ENCODE measurements at regions of chr21 and their contacts with region 1.

Region 1: GRCh38 chr21:42593007-42593806 is 60.2 kb upstream of the PDE9A start:
- DNase-seq: peak; percentile 90
- H3K4me3 Mint-ChIP-seq: no peak overlapping the region
- H3K27ac Mint-ChIP-seq: no peak overlapping the region
- H3K4me1 Mint-ChIP-seq: peaks cover 15% of the 10 kb centered on the region
- H3K27me3 Mint-ChIP-seq: peaks cover 2% of the 10 kb centered on the region

Region 2: GRCh38 chr21:42513985-42514882 is 79.0 kb before region 1 on chr21:
- intact Hi-C with region 1: loop called (anchors 10 kb)
- DNase-seq: peak; percentile 90
- H3K4me3 Mint-ChIP-seq: peak overlapping the region; percentile 78
- H3K27ac Mint-ChIP-seq: peak overlapping the region; percentile 10
- H3K4me1 Mint-ChIP-seq: peaks cover 20% of the 10 kb centered on the region
- H3K27me3 Mint-ChIP-seq: peaks cover 14% of the 10 kb centered on the region

Region 3: GRCh38 chr21:42818328-42818749 is 225.1 kb after region 1 on chr21:
- intact Hi-C with region 1: loop called (anchors 2 kb)
- DNase-seq: peak; percentile 85
- H3K4me3 Mint-ChIP-seq: no peak overlapping the region
- H3K27ac Mint-ChIP-seq: no peak overlapping the region
- H3K4me1 Mint-ChIP-seq: no peaks in the 10 kb centered on the region
- H3K27me3 Mint-ChIP-seq: peaks cover 5% of the 10 kb centered on the region

Region 4: DNA sequence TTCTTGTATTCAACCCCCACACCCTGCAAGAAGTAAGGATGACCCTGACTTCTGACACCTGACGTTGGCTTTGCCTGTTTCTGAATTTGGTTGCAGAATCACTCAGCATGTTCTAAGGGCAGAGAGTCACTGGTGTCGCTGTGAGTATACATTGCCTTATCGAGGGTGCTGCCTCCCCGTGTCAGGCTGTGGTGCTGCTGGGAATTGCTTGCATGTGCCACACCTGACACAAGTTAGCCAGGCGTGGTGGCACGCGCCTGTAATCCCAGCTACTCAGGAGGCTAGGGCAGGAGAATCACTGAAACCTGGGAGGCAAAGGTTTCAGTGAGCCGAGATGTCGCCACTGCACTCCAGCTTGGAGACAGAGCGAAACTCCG is 240.2 kb after region 1 on chr21:
- intact Hi-C with region 1: loop called (anchors 2 kb)
- DNase-seq: peak; percentile 87
- H3K4me3 Mint-ChIP-seq: peak overlapping the region; percentile 69
- H3K27ac Mint-ChIP-seq: peak overlapping the region; percentile 51
- H3K4me1 Mint-ChIP-seq: peaks cover 25% of the 10 kb centered on the region
- H3K27me3 Mint-ChIP-seq: peaks cover 11% of the 10 kb centered on the region

Region 5: DNA sequence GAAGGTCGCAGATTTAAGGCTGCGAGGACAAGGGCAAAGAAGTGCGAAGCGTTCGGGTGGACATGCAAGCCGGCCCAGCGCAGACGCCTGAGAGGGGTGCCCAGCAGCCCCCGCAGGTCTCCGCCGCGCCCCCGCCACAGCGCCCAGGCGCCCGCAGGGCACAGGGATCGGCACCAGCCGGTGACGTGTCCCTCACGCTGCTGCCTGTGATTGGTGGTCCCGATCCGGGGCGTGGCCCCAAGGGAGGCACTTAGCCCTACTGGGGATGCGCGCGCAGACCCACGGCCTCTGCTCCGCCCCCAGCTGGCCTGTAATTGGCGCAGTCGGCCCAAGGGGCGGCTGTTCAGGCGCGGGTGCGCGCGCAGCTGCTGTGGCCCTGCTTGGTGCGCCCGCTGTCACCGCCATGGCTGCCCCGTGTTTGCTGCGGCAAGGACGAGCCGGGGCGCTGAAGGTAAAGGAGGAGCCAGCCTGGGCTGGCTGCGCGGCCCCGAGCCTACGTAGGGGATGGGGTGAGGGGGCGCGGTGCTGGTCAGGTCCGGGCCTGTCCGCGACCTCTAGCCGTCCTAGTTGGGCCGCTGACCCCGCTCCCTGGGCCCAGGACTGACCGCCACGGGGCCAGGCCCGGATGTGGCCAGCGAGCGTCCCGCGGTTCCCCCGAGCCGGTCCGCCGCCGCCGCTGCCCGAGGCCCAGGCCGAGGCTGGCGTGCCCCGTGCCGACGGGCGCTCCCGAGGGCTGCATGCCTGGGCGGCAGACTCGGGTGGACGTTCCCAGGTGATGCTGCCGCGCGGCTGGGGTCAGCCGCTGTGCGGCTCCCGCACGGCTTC is 299.9 kb after region 1 on chr21 and contains the start of gene NDUFV3:
- intact Hi-C with region 1: loop called (anchors 5 kb)
- DNase-seq: peak; percentile 99
- H3K4me3 Mint-ChIP-seq: peak within 1 kb of the TSS; percentile 96
- H3K27ac Mint-ChIP-seq: peak within 1 kb of the TSS; percentile 98
- H3K4me1 Mint-ChIP-seq: peaks cover 8% of the 10 kb centered on the region
- H3K27me3 Mint-ChIP-seq: no peaks in the 10 kb centered on the region
- total RNA-seq, gene NDUFV3: 41.2 and 41.7 TPM in 2 replicates

Measured in activated CD4-positive, alpha-beta T cell treated with anti-CD3 and anti-CD28 coated beads, Interleukin-2, amount 10 ng/mL, durations not matched to agents 24 days and 14 days (primary cell).